AG04449 (cell line): ENCODE measurements at regions of chr2 and their contacts with region 1.

Region 1: DNA sequence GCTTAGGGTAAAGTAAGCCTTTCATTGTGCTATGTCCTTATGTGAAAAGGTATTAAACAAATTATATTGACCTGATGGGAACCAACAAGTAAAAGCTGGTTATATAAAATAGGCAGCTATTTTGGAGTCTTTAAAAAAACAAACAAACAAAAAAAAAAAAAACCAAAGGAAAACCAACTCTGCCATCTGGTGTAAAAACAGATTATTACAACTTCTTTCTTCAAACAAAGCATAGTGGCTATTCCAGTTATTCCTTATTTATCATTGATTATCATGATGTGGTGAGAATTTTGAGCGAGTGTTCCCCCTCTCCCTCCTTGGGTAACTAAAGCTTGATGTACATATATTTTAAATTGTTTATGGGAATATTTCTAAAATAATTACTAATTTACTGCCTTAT is 122.4 kb upstream of the FHL2 start:
- DNase-seq: no peak
- H3K4me3 ChIP-seq: no peak overlapping the region
- CTCF ChIP-seq: no peak

Region 2: GRCh38 chr2:105358593-105358992 is 162.6 kb before region 1 on chr2:
- CTCF ChIA-PET with region 1: interaction called, 167 read pairs
- POLR2A ChIA-PET with region 1: interaction called, 5 read pairs
- DNase-seq: no peak
- H3K4me3 ChIP-seq: no peak overlapping the region
- CTCF ChIP-seq: no peak

Region 3: DNA sequence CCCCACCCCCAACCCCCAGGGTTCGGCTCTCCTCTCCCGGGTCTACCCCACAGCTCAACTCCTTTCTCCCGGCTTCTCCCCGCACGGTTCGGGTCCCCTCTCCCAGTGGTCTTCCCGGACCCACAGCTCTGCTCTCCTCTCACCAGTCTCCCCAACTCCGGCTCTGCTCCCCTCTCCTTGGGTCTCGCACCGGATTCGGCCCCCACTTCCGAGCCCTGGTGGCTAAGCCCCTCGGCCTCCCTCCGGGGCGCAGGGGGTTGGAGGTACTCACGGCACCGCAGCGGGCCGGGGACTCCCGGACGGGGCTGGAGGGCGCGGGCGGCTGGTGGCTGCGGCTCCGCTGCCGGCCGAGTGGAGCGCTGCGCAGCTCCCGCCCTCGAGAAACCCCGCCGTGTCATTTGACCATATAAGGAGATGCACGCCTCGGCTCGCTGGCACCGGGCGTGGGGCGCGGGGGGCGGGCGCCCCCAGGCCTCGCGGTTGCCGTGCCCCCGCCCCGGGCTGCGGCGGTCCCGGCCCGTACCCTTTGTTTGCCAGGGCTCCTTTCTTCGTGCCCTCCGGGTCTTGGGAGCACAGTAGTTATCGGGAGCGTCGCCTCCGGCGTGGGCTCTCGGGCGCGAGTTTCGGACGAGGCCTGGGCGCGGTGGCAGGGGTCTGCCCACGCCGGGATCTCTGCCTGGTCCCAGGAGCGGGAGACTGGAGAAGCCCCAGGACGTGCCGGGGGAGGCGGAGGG is 122.3 kb before region 1 on chr2 and contains the start of gene FHL2:
- CTCF ChIA-PET with region 1: interaction called, 328 read pairs
- POLR2A ChIA-PET with region 1: interaction called, 4 read pairs
- DNase-seq: no peak
- H3K4me3 ChIP-seq: peak within 1 kb of the TSS; percentile 98
- CTCF ChIP-seq: peak; percentile 63

Region 4: GRCh38 chr2:105409717-105410116 is 111.5 kb before region 1 on chr2:
- CTCF ChIA-PET with region 1: interaction called, 328 read pairs
- POLR2A ChIA-PET with region 1: no interaction called
- DNase-seq: peak; percentile 77
- H3K4me3 ChIP-seq: no peak overlapping the region
- CTCF ChIP-seq: no peak

Region 5: GRCh38 chr2:105510761-105511610 is 10.2 kb before region 1 on chr2:
- CTCF ChIA-PET with region 1: interaction called, 27 read pairs
- POLR2A ChIA-PET with region 1: no interaction called
- DNase-seq: no peak
- H3K4me3 ChIP-seq: no peak overlapping the region
- CTCF ChIP-seq: no peak